GM13976 (cell line): ENCODE measurements at regions of chr16 and their contacts with region 1.

Region 1: GRCh38 chr16:52191531-52192134 is 355.3 kb downstream of the TOX3 start:
- DNase-seq: peak; percentile 26
- CTCF ChIP-seq: peak; percentile 90

Region 2: DNA sequence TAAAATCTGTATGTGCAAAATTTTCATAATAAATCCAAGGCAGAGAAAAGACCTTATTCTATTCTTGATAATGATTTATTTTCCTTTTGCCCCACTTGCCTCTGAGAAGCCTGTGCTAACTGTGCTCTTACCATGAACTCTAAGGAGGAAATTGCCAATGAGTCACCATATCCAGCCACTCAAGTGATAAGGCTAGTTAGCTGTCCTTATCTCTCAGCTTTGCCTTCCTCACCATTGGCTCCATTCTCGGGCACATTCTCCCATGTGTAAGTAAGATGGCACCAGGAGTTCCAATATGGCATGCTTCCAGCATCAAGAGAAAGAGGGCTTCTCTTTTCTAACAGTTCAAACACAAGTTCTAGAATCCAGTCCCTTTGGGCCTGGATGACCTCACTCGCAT is 212.9 kb after region 1 on chr16:
- in situ Hi-C with region 1: no loop called
- DNase-seq: no peak
- CTCF ChIP-seq: no peak

Region 3: GRCh38 chr16:52912565-52913173 is 721.0 kb after region 1 on chr16:
- in situ Hi-C with region 1: loop called (anchors 25 kb)
- DNase-seq: peak; percentile 52
- CTCF ChIP-seq: peak; percentile 78

Region 4: GRCh38 chr16:53022374-53022773 is 830.7 kb after region 1 on chr16:
- in situ Hi-C with region 1: loop called (anchors 25 kb)
- DNase-seq: peak; percentile 48
- CTCF ChIP-seq: peak; percentile 26